ENCODE measurements at regions of chr16 and their contacts with region 1.

Region 1: DNA sequence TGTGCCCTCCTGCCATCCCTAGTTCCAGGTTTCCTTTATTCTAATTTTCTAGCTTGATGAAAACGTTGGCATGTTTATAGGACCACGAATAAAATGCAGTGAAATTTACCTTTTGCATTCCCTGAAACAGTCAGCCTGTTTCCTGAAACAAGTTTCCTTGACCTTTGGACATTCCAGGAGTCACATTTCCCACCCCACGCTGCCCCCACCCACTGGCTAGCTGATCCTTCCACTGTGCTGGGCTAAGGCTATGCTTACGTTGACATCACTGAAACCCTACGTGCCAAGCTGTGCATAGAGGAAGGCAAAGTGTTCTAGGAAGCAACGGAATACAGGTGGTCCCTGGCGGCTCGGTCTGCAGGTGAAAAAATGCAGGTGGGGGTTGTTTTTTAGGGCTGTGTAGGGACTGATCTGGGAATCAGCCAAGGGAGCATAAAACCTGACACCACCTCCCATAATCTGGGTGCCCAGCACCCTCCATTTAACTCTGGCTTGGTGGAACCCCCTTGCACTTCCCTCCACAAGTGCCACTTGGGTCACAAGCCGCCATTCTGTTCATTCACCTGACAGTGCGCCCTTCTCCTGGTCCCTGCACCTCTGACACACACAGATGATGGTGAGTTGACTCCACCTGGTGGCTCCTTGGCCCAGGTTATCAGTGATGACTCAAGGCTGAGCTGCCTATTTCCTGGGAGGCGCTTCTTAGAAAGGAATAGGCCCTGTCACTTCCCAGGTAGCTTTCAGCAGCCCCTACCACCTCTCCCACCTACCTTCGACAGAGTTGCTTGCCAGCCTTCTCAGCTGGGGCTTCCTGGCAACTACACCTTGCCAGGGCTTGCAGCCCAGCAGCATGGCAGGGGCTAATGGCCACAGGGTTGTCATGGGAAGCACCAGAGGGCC is 83.7 kb downstream of the N4BP1 start:
- DNase-seq: peak in 1 of 2 donors; percentile 50
- H3K4me3 ChIP-seq: no peak overlapping the region
- H3K27ac ChIP-seq: no peak overlapping the region
- H3K4me1 ChIP-seq: no peaks in the 10 kb centered on the region
- H3K27me3 ChIP-seq: no peaks in the 10 kb centered on the region
- CTCF ChIP-seq: no peak

Region 2: GRCh38 chr16:47574091-47575054 is 951.9 kb before region 1 on chr16:
- intact Hi-C with region 1: loop called (anchors 5 kb)
- DNase-seq: no peak
- H3K4me3 ChIP-seq: no peak overlapping the region
- H3K27ac ChIP-seq: no peak overlapping the region
- H3K4me1 ChIP-seq: no peaks in the 10 kb centered on the region
- H3K27me3 ChIP-seq: no peaks in the 10 kb centered on the region
- CTCF ChIP-seq: no peak

Region 3: GRCh38 chr16:47888142-47888541 is 638.2 kb before region 1 on chr16:
- intact Hi-C with region 1: no loop called
- DNase-seq: no peak
- H3K4me3 ChIP-seq: no peak overlapping the region
- H3K27ac ChIP-seq: no peak overlapping the region
- H3K4me1 ChIP-seq: peaks cover 0 to 12% (median 3%) of the 10 kb centered on the region in 4 donors
- H3K27me3 ChIP-seq: no peaks in the 10 kb centered on the region
- CTCF ChIP-seq: no peak